T-cell (primary cell): ENCODE measurements at regions of chr2 and their contacts with region 1.

Region 1: DNA sequence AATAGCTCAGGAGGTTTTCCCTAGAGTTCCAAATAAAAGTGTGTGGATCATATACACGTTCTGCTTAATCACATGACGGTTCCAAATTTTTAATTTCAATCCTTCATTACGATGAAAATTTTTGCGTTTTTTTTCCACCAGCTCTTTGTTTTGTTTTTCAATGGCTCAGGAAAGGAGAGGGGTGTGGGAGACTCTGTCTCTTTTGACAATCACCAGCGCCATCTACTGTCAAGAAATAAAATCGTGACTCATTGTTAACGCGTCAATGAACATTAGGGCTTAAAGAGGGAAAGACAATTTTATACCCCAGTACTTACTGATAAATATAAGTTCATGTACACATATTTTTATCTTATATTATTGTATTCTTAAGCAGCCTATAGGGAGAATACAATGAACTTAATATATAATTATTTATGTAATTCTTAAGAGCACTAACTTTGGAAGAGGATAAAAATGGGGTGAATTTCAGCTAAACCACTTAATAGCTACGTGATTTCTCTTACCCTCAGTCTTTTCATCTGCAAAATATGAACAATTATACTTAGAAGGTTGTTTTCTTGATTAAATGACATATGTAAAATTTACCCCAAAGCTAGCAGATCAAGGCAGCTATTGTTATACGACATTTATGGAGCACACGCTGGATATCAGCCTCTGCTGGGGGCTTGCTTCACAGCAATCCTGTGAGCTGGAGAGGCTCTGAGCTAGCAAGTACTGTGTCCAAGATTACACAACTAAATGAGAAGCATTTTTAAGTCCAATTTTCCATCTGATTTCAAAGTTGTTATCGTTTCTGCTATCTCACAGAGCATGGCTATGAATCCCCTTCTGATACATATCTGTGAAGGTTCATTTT is 47.4 kb upstream of the RMDN2 start:
- DNase-seq: peak in 5 of 35 experiments; percentile 12 to 78 (median 15)
- ATAC-seq: peak; percentile 62 to 81 (median 67)
- H3K4me3 ChIP-seq: no peak overlapping the region
- H3K4me3 Mint-ChIP-seq: no peak overlapping the region
- H3K27ac ChIP-seq: no peak overlapping the region
- H3K27ac Mint-ChIP-seq: no peak overlapping the region
- H3K4me1 ChIP-seq: no peaks in the 10 kb centered on the region
- H3K4me1 Mint-ChIP-seq: peaks cover 0 to 6% (median 2%) of the 10 kb centered on the region in 3 donors
- H3K27me3 ChIP-seq: peaks cover 0 to 15% of the 10 kb centered on the region in 2 experiments
- H3K27me3 Mint-ChIP-seq: peaks cover 17% of the 10 kb centered on the region in 2 donors

Region 2: GRCh38 chr2:37389989-37390765 is 487.5 kb before region 1 on chr2:
- CTCF ChIA-PET with region 1: interaction called, 54 to 56 read pairs
- POLR2A ChIA-PET with region 1: no interaction called
- DNase-seq: peak in 34 of 35 experiments; percentile 12 to 85 (median 39)
- ATAC-seq: peak; percentile 96 to 99 (median 98)
- H3K4me3 ChIP-seq: no peak overlapping the region
- H3K4me3 Mint-ChIP-seq: peak overlapping the region in 1 of 3 donors; percentile 35
- H3K27ac ChIP-seq: peak overlapping the region; percentile 71
- H3K27ac Mint-ChIP-seq: no peak overlapping the region
- H3K4me1 ChIP-seq: peaks cover 19 to 22% of the 10 kb centered on the region in 2 experiments
- H3K4me1 Mint-ChIP-seq: peaks cover 0 to 4% (median 0%) of the 10 kb centered on the region in 3 donors
- H3K27me3 ChIP-seq: peaks cover 0 to 4% of the 10 kb centered on the region in 2 experiments
- H3K27me3 Mint-ChIP-seq: no peaks in the 10 kb centered on the region

Region 3: DNA sequence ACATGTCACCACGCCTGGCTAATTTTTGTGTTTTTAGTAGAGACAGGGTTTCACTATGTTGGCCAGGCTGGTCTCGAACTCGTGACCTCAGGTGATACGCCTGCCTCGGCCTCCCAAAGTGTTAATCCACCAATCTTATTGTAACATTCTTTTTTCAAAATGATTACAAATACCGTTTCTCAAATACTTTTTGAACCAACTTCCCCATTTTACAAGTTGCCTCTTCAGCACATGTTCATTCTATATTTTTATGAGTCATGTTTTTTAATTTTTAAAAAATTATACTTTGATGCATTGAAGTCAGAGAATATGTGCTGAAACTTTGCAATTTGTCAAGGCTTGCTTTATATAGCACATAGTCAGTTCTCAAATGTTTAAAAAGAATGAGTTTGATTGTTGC is 475.1 kb before region 1 on chr2:
- CTCF ChIA-PET with region 1: interaction called, 54 to 56 read pairs
- POLR2A ChIA-PET with region 1: no interaction called
- DNase-seq: no peak
- ATAC-seq: no peak
- H3K4me3 ChIP-seq: no peak overlapping the region
- H3K4me3 Mint-ChIP-seq: no peak overlapping the region
- H3K27ac ChIP-seq: no peak overlapping the region
- H3K27ac Mint-ChIP-seq: no peak overlapping the region
- H3K4me1 ChIP-seq: no peaks in the 10 kb centered on the region
- H3K4me1 Mint-ChIP-seq: no peaks in the 10 kb centered on the region
- H3K27me3 ChIP-seq: no peaks in the 10 kb centered on the region
- H3K27me3 Mint-ChIP-seq: peaks cover 4 to 6% of the 10 kb centered on the region in 2 donors